ENCODE measurements at regions of chr20 and their contacts with region 1.

Region 1: DNA sequence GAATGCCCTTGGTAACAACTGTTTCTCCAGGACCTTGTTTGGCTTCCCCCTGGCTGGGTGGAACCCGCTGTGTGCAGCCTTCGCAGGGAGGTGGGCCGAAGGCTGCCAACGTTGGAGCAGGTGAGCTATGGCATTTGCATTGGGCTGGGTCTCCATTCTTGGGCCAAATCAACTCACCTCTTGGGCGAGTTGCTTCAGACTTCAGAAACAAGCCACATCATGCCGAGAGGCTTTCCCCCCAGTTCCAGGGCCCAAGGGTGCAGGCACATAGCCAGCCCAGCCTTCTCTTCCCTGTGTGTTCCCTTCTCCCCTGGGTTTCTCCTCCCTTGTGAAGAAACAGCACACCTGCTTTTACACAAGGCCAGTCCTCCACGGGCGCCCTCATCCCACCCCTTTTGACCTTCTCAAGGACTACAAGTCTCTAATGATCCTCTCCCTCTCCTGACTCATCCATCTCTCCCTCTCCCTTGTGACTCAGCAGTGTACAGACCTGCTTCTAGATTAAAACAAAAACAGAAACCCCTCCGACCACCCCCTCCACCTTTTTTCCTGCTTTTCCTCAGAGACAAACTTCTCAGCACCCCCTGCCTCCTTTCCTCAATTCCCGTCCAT is 41.6 kb downstream of the FAM209B start:
- DNase-seq: no peak
- ATAC-seq: peak; percentile 51; the same call in 1 of the 2 replicates
- H3K4me3 ChIP-seq: no peak overlapping the region
- H3K27ac ChIP-seq: no peak overlapping the region
- H3K4me1 ChIP-seq: peaks cover 4 to 27% of the 10 kb centered on the region in 2 experiments; a peak in 2 of 4 replicates
- H3K27me3 ChIP-seq: no peaks in the 10 kb centered on the region
- CTCF ChIP-seq: no peak
- POLR2A ChIP-seq: no peak
- RAD21 ChIP-seq: no peak

Region 2: DNA sequence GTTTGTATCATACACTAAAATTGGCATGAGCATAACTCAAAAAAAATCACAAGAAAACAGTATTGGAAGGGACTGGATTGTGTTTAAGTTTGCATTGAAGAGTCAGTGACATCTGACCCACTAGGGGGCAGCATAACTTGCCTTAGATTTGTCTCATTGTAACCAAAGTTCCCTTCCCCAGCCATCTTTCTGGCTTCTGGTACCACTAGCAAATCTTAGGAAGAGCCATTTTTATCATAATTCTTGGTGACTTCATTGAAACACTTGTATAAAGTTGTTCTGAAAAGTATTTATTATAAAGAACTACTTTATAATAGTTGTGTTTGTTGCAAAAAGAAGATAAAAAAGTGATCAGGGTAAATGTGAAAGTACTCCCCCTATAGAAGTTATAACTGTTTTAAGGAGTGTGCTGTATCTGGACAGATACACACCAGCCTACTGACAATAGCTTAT is 174.5 kb before region 1 on chr20:
- CTCF ChIA-PET with region 1: no interaction called
- POLR2A ChIA-PET with region 1: no interaction called
- RAD21 ChIA-PET with region 1: no interaction called
- intact Hi-C with region 1: loop called (anchors 2 kb)
- DNase-seq: peak; percentile 51
- ATAC-seq: peak; percentile 81
- H3K4me3 ChIP-seq: no peak overlapping the region
- H3K27ac ChIP-seq: no peak overlapping the region
- H3K4me1 ChIP-seq: no peaks in the 10 kb centered on the region
- H3K27me3 ChIP-seq: no peaks in the 10 kb centered on the region
- CTCF ChIP-seq: peak; percentile 49 to 89 (median 75); a peak in 5 of 6 replicates
- POLR2A ChIP-seq: no peak
- RAD21 ChIP-seq: peak; percentile 51

Region 3: DNA sequence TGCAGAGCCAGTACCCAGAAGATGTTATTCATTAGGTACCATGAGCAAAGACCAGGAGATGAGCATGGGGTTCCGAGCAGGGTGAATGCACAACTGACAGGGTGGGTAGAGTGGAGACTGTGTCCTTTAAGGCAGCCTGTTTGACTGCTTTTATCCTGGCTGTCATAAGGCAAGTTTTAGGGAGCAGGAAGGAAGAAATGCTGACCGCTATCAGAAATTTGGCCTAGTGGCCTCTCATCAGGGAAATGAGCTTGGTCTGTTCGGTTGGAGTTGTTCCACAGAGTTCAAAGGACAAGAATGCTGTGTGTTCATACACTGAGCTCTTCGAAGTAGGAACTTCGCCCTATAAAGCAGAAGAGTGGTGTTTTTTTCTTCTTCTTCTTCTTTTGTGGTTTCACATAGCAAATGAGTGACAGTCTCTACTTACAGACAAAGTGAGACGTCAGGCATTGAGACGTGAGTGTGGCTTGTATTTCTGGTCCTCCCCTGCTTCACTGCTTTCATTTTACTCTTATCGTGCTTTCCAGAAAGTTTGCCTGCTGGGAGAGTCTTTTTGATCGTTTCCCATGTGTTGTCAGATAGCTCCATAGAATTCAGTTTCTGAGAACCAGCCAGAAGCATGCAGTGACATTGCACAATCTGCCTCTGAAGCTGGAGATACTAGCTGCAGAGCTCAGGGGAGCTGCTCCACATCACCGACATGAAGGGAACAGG is 162.7 kb before region 1 on chr20 and contains the start of gene CASS4:
- CTCF ChIA-PET with region 1: no interaction called
- POLR2A ChIA-PET with region 1: no interaction called
- RAD21 ChIA-PET with region 1: no interaction called
- intact Hi-C with region 1: no loop called
- DNase-seq: no peak
- ATAC-seq: no peak
- H3K4me3 ChIP-seq: no peak within 1 kb of the TSS
- H3K27ac ChIP-seq: no peak within 1 kb of the TSS
- H3K4me1 ChIP-seq: no peaks in the 10 kb centered on the region
- H3K27me3 ChIP-seq: no peaks in the 10 kb centered on the region
- CTCF ChIP-seq: no peak
- POLR2A ChIP-seq: no peak
- RAD21 ChIP-seq: no peak
- total RNA-seq, gene CASS4: 0.17 TPM